ENCODE measurements at regions of chr1 and their contacts with region 1.

Region 1: DNA sequence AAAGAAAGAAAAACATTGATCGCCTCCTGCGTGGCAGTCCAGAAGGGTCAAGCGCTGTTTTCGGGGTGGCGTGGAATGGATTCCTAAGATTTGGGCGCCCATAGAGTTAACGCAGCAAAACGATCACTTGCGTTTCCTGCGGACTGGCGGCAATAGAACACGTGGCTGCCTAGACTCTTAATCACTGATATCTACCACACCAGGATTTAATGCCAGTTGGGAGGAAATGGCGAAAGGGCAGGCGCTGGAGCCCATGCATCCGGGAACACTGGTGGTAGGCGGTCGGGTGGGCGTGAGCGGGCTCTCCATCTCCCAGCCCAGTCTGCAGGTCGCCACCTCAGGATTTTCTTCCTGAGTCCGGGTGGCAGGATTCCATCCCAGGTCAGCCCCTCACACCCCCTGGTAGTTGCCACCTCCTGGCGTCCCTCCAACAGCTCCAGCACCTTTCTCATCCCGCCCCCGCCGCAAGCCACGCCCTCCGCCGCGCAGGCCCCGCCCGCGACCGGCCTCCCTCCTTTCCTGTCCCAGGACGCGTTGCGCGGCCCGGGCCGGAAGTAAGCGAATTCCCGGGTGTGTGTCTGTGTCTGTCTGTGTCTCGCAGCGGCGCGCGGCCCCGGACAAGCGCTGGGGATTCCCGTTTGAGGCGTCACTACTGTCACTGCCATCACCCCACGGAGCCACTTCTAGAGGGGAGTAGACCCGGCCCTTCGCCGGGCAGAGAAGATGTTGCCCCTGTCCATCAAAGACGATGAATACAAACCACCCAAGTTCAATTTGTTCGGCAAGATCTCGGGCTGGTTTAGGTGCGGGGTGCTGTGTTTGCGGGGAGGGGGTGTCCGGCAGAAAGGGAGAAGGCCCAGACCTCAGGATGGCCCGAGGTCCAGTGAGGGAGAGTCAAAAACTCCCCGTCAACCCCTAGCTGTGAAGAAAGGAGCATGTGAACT is at the start of gene SLC30A7:
- DNase-seq: peak; percentile 52 to 92
- ATAC-seq: peak; percentile 86 to 94
- H3K4me3 ChIP-seq: peak within 1 kb of the TSS; percentile 99
- H3K27ac ChIP-seq: peak within 1 kb of the TSS; percentile 91 to 95
- H3K4me1 ChIP-seq: peaks cover 8% of the 10 kb centered on the region; the same call in 1 of the 3 replicates
- CTCF ChIP-seq: no peak
- EP300 ChIP-seq: no peak
- POLR2A ChIP-seq: peak; percentile 55
- RAD21 ChIP-seq: no peak
- polyA plus RNA-seq, gene SLC30A7: 9.6 and 11.1 TPM in 2 replicates

Region 2: DNA sequence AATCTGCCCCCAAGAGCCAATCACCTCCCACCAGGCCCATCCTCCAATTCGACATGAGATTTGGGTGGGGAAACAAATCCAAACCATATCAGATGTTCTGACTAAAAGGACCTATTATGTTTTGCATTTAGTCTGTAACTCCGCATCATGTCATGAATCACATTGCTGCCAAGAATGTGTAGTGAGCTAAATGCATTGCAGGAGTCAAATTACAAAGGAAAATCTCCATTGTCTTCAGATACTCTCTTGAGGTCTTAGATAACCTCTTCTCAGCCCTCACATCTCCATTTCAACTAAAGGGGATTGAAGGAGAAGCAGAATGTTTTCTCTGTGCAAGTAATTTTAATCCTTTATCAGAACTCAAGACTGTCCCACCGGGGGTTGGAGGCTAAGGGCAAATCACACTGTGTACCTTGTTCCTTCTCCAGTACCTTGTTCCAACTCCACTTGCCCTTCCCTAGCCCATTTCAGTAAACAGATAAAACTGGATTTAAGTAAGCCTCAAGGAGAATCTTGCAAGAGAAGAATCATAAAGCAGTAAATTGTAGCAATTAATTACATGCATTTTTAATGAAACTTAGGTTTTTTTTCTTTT is 35.3 kb before region 1 on chr1:
- CTCF ChIA-PET with region 1: no interaction called
- POLR2A ChIA-PET with region 1: no interaction called
- DNase-seq: no peak
- ATAC-seq: no peak
- H3K4me3 ChIP-seq: no peak overlapping the region
- H3K27ac ChIP-seq: no peak overlapping the region
- H3K4me1 ChIP-seq: no peaks in the 10 kb centered on the region
- CTCF ChIP-seq: no peak
- EP300 ChIP-seq: no peak
- POLR2A ChIP-seq: no peak
- RAD21 ChIP-seq: no peak

Region 3: DNA sequence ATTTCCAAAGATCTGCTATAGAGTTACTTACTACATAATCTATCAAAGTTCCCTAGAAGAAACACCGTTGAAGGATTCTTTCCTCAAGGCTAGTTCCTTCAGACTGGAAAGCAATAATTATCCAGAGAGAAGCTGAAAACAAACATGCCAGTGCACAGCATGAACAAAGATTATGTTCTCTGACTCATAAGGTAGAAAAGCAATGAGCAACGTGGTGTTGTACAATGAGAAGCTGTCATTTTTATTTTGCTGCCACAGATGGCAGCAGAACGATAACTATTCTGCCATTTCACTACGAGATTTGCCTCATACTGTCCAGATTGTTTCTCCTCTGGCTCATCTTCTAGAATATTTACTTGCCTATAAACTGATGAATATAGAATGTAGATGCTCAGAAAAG is 11.8 kb before region 1 on chr1:
- CTCF ChIA-PET with region 1: interaction called, 9 read pairs
- POLR2A ChIA-PET with region 1: interaction called, 11 read pairs
- DNase-seq: peak; percentile 10 to 44
- ATAC-seq: peak; percentile 88 to 92
- H3K4me3 ChIP-seq: no peak overlapping the region
- H3K27ac ChIP-seq: no peak overlapping the region
- H3K4me1 ChIP-seq: peaks cover 11% of the 10 kb centered on the region
- CTCF ChIP-seq: no peak; the same call in 2 of the 3 replicates
- EP300 ChIP-seq: no peak
- POLR2A ChIP-seq: no peak
- RAD21 ChIP-seq: 0 out of 5 replicates have a peak, but pooled peaks of 1 of the 2 experiments have one; percentile 12

Measured in A549 (cell line).